BJ (cell line): ENCODE measurements at regions of chr18 and their contacts with region 1.

Region 1: GRCh38 chr18:49768051-49768391 is 45.3 kb downstream of the ACAA2 start:
- DNase-seq: no peak
- H3K4me3 ChIP-seq: no peak overlapping the region
- H3K27me3 ChIP-seq: peaks cover 2% of the 10 kb centered on the region
- CTCF ChIP-seq: peak; percentile 73

Region 2: GRCh38 chr18:49561289-49562193 is 206.5 kb before region 1 on chr18 and contains the start of gene LIPG:
- CTCF ChIA-PET with region 1: interaction called, 29 read pairs
- POLR2A ChIA-PET with region 1: no interaction called
- DNase-seq: no peak
- H3K4me3 ChIP-seq: peak within 1 kb of the TSS; percentile 20
- H3K27me3 ChIP-seq: peaks cover 25% of the 10 kb centered on the region
- CTCF ChIP-seq: no peak
- polyA plus RNA-seq, gene LIPG: 0.25 and 0.42 TPM in 2 replicates

Region 3: DNA sequence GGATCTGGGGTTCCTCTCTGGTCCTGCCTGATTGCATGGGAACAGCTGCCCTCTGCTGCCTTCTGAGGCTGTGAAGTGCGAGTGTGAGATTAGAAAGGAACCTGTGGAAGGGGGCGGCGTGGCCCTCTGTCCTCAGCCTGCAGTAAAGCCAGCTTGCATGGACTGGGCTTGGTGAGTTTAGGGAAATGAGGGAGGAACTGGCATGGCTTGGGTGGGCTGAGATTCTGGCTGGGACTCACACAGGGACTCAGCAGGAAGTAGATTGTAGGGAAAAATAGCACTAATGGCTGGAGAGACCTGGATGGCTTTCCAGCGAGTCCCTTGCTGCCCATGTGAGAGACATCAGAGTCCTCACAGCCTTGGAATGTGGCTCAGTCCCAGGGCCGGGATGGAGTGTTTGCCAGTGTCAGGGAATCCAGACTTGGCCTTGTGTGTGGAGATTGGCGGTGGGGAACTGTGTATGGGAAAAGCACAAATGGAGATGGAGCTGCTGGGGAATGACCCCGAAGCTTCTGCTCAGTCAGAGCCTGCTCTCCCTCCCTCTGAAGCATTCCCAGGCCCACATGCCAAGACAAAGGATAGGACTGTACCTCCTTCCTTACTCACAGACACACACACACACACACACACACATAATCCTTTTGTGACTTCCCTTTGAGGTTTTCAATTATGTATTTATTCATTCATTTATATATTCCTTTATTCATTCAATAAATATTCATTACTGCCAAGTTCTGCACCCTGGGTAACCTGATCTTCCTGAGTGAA is 70.1 kb before region 1 on chr18:
- CTCF ChIA-PET with region 1: no interaction called
- POLR2A ChIA-PET with region 1: no interaction called
- DNase-seq: no peak
- H3K4me3 ChIP-seq: no peak overlapping the region
- H3K27me3 ChIP-seq: no peaks in the 10 kb centered on the region
- CTCF ChIP-seq: no peak

Region 4: DNA sequence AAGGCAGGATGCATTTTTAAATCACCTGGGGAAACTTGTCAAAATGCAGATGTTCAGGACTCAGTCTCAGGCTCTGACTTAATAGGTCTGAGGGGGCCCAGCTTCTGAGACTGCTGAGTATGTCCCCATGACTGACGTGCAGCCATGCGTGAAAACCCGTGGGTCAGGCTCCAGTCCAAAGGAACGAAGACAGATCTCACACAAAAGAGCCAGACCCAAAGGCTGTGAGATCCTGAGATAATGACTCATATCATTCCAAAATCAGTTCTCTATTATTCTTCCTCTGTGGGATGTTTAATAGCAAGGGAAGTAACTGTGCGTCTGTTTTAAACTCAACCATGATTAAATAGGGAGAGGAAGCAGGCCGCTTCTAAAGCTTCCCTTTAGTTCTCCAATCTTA is 152.7 kb after region 1 on chr18:
- CTCF ChIA-PET with region 1: no interaction called
- POLR2A ChIA-PET with region 1: no interaction called
- DNase-seq: no peak
- H3K4me3 ChIP-seq: no peak overlapping the region
- H3K27me3 ChIP-seq: peaks cover 7% of the 10 kb centered on the region
- CTCF ChIP-seq: no peak

Region 5: GRCh38 chr18:50061876-50062517 is 294.0 kb after region 1 on chr18:
- CTCF ChIA-PET with region 1: no interaction called
- POLR2A ChIA-PET with region 1: no interaction called
- DNase-seq: no peak
- H3K4me3 ChIP-seq: no peak overlapping the region
- H3K27me3 ChIP-seq: peaks cover 2% of the 10 kb centered on the region; the same call in 1 of the 2 replicates
- CTCF ChIP-seq: no peak